Posterior vena cava (tissue), 2 donors: ENCODE measurements at regions of chr12 and their contacts with region 1.

Region 1: GRCh38 chr12:53652366-53652765 is 23.5 kb downstream of the ATP5MC2 start:
- DNase-seq: no peak

Region 2: DNA sequence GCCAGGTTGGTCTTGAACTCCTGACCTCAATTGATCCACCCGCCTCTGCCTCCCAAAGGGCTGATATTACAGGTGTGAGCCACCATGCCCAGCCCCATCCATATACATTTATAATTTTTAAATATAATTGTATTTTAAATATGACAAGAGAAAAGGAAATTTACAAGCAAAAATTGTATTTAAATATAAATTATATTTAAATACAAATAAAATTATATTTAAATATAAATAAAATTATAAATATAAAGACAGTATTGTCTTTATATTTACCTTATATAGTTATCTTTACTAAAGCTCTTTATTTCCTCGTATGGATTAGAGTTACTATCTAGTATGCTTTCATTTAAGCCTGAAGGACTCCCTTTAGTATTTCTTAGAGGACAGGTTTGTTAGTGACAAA is 14.3 kb before region 1 on chr12:
- intact Hi-C with region 1: no loop called
- DNase-seq: no peak

Region 3: DNA sequence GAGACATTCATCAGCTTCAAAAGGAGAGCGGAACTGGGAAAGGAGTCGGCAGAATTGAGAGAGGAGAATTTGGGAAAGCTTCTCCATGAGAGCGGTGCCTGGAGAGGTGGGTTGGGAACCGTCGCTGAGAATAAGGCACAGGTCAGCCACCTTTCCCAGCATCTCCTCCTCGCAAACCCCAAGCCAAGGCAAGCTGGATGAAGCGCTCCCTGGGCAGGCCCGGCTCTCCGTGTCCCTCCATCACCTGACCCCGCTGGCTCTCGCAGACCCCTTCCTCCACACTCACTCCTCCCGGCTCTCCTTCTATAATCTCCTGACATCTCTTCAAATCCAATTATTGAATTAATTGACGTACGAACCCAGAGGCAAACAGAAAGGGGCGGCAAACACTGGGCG is 42.4 kb after region 1 on chr12:
- intact Hi-C with region 1: loop called in 1 of 2 experiments (anchors 1 kb)
- DNase-seq: no peak